Lower leg skin (tissue), 4 donors: ENCODE measurements at regions of chr3 and their contacts with region 1.

Region 1: DNA sequence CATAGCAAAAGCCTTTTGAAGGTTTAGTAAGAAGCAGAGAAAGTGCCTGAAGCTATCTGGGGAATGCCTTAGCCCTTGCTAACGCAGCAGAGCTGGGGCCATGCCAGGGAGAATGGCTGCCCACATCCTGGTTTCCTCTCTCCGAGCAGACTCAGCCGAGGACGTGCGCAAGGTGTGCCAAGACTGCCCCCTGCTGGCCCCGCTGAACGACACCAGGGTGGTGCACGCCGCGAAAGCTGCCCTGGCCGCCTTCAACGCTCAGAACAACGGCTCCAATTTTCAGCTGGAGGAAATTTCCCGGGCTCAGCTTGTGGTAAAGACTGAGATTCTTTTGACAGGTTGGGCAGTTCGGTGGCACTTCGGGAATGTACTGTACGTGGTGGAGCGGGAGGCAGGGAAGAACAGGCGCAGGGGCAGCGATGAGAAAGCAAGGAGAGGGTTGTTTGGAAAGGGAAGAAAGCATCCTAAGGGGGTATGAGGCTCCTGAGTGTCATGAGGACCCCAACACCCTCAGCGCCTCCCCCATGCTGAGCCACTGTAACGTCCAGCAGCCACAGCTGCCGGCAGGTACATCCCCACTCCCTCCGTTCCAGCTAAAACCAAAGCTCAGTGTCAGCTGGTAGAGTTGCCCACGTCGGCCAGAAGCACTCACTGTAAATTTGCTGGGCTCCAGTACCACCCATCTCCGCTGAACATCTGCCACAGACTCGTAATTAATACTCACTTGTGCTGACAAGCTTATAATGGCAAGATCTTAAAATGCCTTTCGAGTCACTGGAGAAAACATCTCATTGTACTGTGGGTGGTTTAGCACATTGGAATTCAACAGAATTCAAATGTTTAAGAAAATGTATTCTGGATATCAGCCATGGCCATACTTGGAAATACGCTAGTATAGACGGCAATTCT is 4.4 kb downstream of the AHSG start:
- DNase-seq: peak; percentile 84 to 96
- H3K4me3 ChIP-seq: no peak overlapping the region
- CTCF ChIP-seq: peak in 1 of 3 donors; percentile 72
- POLR2A ChIP-seq: no peak

Region 2: DNA sequence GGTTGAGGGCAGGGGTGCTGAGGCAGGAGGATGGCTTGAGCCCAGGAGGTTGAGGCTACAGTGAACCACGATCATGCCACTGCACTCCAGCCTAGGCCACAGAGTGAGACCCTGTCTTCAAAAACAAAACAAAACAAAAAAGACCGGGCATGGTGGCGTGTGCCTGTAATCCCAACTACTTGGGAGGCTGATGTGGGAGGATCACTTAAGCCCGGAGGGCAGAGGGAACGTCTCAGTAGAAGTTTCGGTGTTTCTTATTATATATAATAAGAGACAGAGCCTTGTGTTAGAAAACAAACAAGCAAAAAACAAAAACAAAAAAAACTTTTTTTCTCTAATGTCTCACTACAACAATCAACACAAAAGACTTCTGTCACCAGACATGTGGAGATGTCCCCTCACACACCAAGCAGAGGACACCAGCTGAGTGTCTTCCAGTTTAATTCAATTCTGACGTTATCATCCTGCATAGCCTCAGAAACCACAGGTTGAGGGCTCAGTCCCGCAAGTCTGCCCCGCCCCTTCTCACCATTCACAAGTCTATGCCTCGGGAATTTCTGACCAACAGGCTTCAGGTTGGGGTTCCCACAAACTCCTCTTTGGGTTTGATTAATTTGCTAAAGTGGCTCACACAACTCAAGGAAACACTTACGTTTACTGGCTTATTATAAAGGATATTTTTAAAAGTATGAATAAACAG is 142.1 kb after region 1 on chr3:
- intact Hi-C with region 1: loop called (anchors 10 kb)
- DNase-seq: no peak
- H3K4me3 ChIP-seq: no peak overlapping the region
- CTCF ChIP-seq: no peak
- POLR2A ChIP-seq: no peak

Region 3: GRCh38 chr3:186826976-186827731 is 209.9 kb after region 1 on chr3:
- intact Hi-C with region 1: loop called (anchors 10 kb)
- DNase-seq: peak; percentile 50 to 92
- H3K4me3 ChIP-seq: peak overlapping the region; percentile 42
- CTCF ChIP-seq: no peak
- POLR2A ChIP-seq: no peak

Region 4: GRCh38 chr3:187025656-187026316 is 408.5 kb after region 1 on chr3:
- intact Hi-C with region 1: no loop called
- DNase-seq: no peak
- H3K4me3 ChIP-seq: no peak overlapping the region
- CTCF ChIP-seq: no peak
- POLR2A ChIP-seq: no peak

Region 5: GRCh38 chr3:187305881-187306280 is 688.6 kb after region 1 on chr3:
- intact Hi-C with region 1: no loop called
- DNase-seq: no peak
- H3K4me3 ChIP-seq: no peak overlapping the region
- CTCF ChIP-seq: no peak
- POLR2A ChIP-seq: no peak